Prostate gland (tissue), 2 donors: ENCODE measurements at regions of chr4 and their contacts with region 1.

Region 1: DNA sequence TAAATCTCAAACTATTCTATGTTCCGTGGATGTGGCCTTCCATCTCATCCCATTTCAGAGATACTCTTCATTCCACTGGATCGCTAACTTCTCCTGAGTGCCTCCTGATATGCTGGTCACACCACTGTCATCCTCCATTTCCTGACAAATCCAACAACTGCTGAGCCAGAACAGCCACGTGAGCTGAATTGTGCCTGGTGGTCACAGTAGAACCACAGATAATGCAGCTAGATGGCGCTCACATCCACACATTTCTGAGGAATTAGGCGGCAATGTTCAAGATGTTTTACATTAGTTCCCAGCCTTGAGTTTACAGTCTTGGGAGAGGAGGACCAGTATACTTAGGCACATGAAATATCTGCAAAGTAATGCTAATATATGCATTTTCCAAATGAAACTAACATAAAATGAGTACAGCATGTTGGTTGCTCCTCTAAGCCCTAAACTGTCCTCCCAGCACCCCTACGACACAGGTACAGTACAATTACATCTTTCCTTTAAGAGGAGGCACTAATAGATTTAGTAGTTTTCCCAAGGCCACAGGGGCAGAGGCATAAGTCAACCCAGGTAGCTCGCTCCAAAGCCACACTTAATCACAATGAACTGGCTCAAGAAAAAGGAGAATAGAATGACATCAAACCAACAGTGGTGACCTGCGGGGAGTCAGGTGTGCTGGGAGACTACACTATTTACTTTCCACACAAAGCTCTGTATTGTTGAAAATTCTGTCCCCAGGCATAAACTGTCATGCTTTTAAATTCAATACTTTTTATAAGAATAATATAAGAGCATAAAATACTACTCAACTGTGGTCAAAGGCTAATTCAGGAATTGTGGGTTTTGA is 134.2 kb downstream of the CHIC2 start:
- DNase-seq: peak; percentile 79
- H3K4me3 ChIP-seq: no peak overlapping the region
- H3K27ac ChIP-seq: no peak overlapping the region
- H3K4me1 ChIP-seq: no peaks in the 10 kb centered on the region
- H3K27me3 ChIP-seq: no peaks in the 10 kb centered on the region
- CTCF ChIP-seq: peak in 3 of 4 experiments; percentile 73 to 84 (median 82)
- POLR2A ChIP-seq: no peak

Region 2: DNA sequence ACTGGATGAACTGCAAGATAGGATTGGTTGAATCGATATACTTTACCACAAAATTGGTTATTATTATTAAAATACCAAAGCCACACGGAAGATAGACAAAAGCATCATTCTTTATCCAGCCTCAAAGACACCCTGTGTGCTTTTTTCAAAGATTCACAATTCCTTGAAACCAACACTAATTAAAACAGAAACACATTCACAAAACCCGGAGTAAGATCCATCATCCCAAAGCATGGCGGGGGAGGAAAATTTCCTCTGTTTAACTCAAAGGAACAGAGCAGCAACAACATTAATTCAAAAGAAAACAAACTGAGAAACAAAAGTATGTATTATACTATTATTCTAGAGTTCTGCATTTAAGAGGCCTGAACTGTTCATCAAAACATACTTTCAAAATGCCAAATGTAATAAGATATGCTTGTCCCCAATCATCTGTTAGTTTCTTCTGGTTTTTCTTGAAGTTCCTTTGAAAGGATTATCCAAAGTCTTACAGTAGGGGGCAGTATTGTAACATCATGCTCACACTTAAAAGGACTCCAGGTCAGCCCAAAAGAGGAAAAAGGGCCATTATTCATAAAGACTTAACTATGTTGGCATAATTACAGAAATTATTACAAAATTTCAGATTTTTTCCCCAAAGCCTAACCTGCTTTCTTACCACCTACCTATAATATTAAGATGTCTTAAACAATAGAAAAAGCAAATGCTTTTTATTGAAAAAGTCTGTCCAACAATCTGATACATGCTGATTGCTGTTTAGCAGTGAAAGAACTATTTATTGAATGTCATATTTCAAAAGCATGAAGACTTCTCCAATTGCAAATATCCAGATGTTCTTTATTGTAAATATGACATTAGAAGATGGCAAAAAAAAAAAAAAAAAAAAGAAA is 733.0 kb before region 1 on chr4:
- intact Hi-C with region 1: loop called (anchors 10 kb)
- DNase-seq: peak; percentile 13
- H3K4me3 ChIP-seq: no peak overlapping the region
- H3K27ac ChIP-seq: no peak overlapping the region
- H3K4me1 ChIP-seq: no peaks in the 10 kb centered on the region
- H3K27me3 ChIP-seq: no peaks in the 10 kb centered on the region
- CTCF ChIP-seq: peak; percentile 64 to 84 (median 74)
- POLR2A ChIP-seq: no peak

Region 3: GRCh38 chr4:53786632-53787031 is 143.5 kb before region 1 on chr4:
- intact Hi-C with region 1: no loop called
- DNase-seq: no peak
- H3K4me3 ChIP-seq: no peak overlapping the region
- H3K27ac ChIP-seq: no peak overlapping the region
- H3K4me1 ChIP-seq: no peaks in the 10 kb centered on the region
- H3K27me3 ChIP-seq: no peaks in the 10 kb centered on the region
- CTCF ChIP-seq: no peak
- POLR2A ChIP-seq: no peak